ENCODE measurements at regions of chr17 and their contacts with region 1.

Region 1: GRCh38 chr17:81018044-81018802 is 16.7 kb upstream of the BAIAP2 start:
- DNase-seq: no peak
- ATAC-seq: peak in 1 of 2 experiments; percentile 27; a peak in 1 of 6 replicates
- H3K4me3 ChIP-seq: no peak overlapping the region
- H3K27ac ChIP-seq: no peak overlapping the region
- H3K4me1 ChIP-seq: no peaks in the 10 kb centered on the region
- CTCF ChIP-seq: no peak
- EP300 ChIP-seq: no peak
- POLR2A ChIP-seq: no peak
- RAD21 ChIP-seq: no peak

Region 2: DNA sequence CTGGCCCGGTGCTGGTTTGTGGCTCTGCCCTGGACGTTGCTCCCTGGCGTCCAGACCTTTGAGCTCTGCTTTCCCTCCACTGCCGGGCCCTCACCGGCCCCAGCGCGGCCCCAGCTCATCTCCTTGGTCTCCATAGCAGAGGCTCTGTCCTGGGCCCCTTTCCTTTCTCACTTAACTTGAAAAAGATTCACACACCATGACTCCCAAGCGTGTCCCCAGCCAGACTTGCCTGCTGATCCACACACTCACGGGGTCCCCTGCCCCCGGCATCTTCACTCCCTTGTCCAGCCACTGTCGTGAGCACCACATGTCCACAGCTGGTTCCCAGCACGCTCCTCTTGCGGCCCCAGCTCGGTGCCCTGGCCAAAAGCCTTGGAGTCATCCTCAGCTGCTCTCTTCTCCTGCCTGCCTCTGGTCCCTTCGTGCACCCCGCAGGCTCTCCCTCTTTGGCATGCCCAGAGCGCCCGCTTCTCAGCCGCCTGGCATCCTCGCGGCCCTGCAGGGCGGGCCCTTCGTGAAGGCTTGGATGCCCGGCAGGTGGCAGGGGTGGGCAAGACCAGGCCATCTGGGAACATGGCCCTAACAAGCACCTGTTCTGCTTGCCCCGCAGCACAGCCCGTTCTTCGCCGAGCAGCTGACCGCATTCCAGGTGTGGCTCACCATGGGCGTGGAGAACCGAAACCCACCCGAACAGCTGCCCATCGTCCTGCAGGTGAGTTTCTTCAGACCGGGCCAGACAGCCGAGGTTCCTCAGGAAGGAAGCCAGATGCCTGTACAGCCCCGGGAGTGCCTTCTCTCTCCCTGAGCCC is 172.2 kb before region 1 on chr17:
- CTCF ChIA-PET with region 1: no interaction called
- POLR2A ChIA-PET with region 1: no interaction called
- DNase-seq: no peak
- ATAC-seq: no peak; a peak in 1 of 6 replicates
- H3K4me3 ChIP-seq: no peak overlapping the region
- H3K27ac ChIP-seq: no peak overlapping the region
- H3K4me1 ChIP-seq: no peaks in the 10 kb centered on the region
- CTCF ChIP-seq: no peak
- EP300 ChIP-seq: no peak
- POLR2A ChIP-seq: no peak
- RAD21 ChIP-seq: no peak

Region 3: DNA sequence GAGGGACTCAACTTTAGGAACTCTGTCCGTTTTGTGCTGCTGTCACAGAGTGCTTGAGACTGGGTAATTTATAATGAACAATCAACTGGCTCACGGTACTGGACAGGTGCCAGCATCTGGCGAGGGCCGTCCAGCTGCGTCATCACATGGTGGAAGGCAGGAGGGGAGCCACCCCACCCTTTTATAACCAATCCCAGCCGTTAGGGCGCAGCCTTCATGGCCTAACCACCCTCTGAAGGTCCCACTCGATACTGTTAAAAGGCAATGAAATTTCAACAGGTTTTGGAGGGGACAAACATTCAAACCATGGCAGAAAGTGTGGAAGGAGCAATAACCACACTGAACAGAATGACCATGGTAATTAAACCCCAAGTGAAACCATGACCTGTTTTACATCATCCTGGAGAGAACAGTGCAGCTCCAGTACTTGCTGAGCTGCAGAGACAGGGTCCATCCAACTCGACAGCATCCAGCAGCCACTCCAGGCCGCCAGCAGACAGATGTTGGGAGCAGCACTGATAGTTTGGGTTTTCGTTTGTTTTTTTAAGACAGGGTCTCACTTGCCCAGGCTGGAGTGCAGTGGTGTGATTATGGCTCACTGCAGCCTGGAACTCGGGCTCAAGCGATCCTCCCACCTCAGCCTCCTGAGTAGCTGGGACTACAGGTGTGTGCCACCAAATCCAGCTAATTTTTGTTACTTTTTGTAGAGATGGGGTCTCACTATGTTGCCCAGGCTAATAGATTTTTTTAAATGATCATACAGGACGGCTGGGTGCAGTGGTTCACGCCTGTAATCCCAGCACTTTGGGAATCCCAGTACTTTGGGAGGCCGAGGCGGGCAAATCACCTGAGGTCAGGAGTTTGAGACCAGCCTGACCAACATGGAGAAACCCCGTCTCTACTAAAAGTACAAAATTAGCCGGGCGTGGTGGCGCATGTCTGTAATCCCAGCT is 15.5 kb before region 1 on chr17:
- CTCF ChIA-PET with region 1: interaction called, 56 read pairs
- POLR2A ChIA-PET with region 1: no interaction called
- DNase-seq: no peak
- ATAC-seq: peak; percentile 15 to 26; a peak in 4 of 6 replicates
- H3K4me3 ChIP-seq: no peak overlapping the region
- H3K27ac ChIP-seq: peak overlapping the region in 1 of 2 experiments; percentile 18; a peak in 1 of 6 replicates
- H3K4me1 ChIP-seq: peaks cover 20% of the 10 kb centered on the region
- CTCF ChIP-seq: no peak
- EP300 ChIP-seq: no peak
- POLR2A ChIP-seq: no peak
- RAD21 ChIP-seq: no peak

Region 4: GRCh38 chr17:81034779-81035388 is 16.7 kb after region 1 on chr17 and contains the start of gene BAIAP2:
- CTCF ChIA-PET with region 1: interaction called, 33 read pairs
- POLR2A ChIA-PET with region 1: interaction called, 4 read pairs
- DNase-seq: peak; percentile 95 to 100
- ATAC-seq: peak; percentile 73 to 88
- H3K4me3 ChIP-seq: peak within 1 kb of the TSS; percentile 72
- H3K27ac ChIP-seq: peak within 1 kb of the TSS; percentile 72 to 90
- H3K4me1 ChIP-seq: peaks cover 19% of the 10 kb centered on the region
- CTCF ChIP-seq: peak; percentile 36
- EP300 ChIP-seq: no peak
- POLR2A ChIP-seq: peak; percentile 100
- RAD21 ChIP-seq: no peak; a peak in 1 of 5 replicates
- polyA plus RNA-seq, gene BAIAP2: 7.1 and 8.6 TPM in 2 replicates

Region 5: GRCh38 chr17:81040791-81041337 is 22.6 kb after region 1 on chr17:
- CTCF ChIA-PET with region 1: interaction called, 26 read pairs
- POLR2A ChIA-PET with region 1: interaction called, 4 read pairs
- DNase-seq: peak; percentile 45 to 77
- ATAC-seq: peak; percentile 48 to 74
- H3K4me3 ChIP-seq: no peak overlapping the region
- H3K27ac ChIP-seq: peak overlapping the region; percentile 70 to 83
- H3K4me1 ChIP-seq: peaks cover 55% of the 10 kb centered on the region
- CTCF ChIP-seq: peak; percentile 55
- EP300 ChIP-seq: no peak
- POLR2A ChIP-seq: no peak
- RAD21 ChIP-seq: no peak

Region 6: GRCh38 chr17:81064678-81065475 is 46.7 kb after region 1 on chr17:
- CTCF ChIA-PET with region 1: interaction called, 21 read pairs
- POLR2A ChIA-PET with region 1: no interaction called
- DNase-seq: no peak
- ATAC-seq: no peak
- H3K4me3 ChIP-seq: no peak overlapping the region
- H3K27ac ChIP-seq: no peak overlapping the region
- H3K4me1 ChIP-seq: no peaks in the 10 kb centered on the region
- CTCF ChIP-seq: no peak
- EP300 ChIP-seq: no peak
- POLR2A ChIP-seq: no peak
- RAD21 ChIP-seq: no peak

Region 7: GRCh38 chr17:81083125-81083765 is 65.0 kb after region 1 on chr17:
- CTCF ChIA-PET with region 1: interaction called, 22 read pairs
- POLR2A ChIA-PET with region 1: no interaction called
- DNase-seq: no peak
- ATAC-seq: no peak
- H3K4me3 ChIP-seq: no peak overlapping the region
- H3K27ac ChIP-seq: no peak overlapping the region
- H3K4me1 ChIP-seq: no peaks in the 10 kb centered on the region
- CTCF ChIP-seq: no peak
- EP300 ChIP-seq: no peak
- POLR2A ChIP-seq: no peak
- RAD21 ChIP-seq: no peak